GM12878 (cell line): ENCODE measurements at regions of chr5 and their contacts with region 1.

Region 1: DNA sequence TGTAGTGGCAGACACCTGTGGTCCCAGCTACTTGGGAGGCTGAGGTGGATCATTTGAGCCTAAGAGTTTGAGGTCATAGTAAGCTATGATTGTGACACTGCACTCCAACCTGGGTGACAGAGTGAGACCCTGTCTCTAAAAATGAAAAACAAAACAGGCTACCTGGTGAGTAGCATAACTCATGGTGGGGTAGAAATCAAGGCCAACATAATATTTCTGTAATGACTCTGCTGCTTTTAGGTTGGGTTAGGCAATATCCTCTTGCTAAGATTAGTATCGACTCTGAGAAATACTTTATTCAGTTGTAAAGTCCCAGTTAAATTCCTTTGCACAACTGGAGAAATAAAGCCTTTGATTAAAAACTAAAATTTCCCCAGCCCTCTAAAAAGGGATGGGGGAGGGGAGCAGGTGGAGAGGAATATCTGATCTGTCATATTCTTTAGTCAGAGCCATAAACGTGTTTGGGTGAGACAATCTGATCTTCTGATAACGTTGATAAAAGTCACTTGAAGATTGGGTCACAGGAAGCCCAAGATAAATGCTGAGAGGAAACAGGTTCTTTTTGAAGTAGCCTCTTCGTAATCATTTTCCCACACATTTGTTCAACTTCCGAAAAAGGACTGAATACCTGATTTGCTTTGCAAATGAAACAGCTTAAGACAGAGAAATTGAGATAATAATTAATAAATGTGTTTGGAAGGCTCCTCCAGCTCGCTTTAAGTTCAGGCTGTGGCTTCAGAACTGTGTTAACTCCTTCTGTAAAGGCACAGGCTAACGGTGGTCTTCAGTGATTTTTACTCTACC is 14.9 kb downstream of the IL4 start:
- DNase-seq: no peak
- ATAC-seq: peak; percentile 34
- H3K4me3 ChIP-seq: no peak overlapping the region
- H3K27ac ChIP-seq: no peak overlapping the region
- H3K4me1 ChIP-seq: peaks cover 18% of the 10 kb centered on the region; the same call in 1 of the 2 replicates
- H3K27me3 ChIP-seq: no peaks in the 10 kb centered on the region
- CTCF ChIP-seq: no peak
- EP300 ChIP-seq: no peak
- POLR2A ChIP-seq: no peak
- RAD21 ChIP-seq: no peak

Region 2: DNA sequence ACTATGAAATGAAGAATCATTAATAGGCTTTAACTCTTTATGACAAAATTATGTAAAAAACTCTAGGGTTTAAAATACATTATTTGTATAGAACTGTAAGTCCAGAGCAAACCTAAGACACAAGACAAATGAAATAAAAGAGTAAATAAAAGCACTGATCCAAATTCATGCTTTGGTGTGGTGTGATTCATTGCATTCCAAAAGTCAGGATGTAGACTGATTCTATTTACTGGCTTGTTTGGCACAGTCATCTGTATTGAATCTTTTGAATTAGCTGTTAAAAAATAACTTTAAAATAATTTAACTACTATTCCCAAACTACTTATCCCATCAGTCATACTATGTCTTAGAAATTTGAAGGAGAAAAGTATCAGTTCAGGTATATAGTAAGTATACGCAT is 16.1 kb after region 1 on chr5:
- CTCF ChIA-PET with region 1: interaction called, 12 read pairs
- POLR2A ChIA-PET with region 1: interaction called, 8 read pairs
- RAD21 ChIA-PET with region 1: interaction called, 8 read pairs
- SMC1A ChIA-PET with region 1: interaction called, 16 read pairs
- in situ Hi-C with region 1: no loop called
- intact Hi-C with region 1: no loop called
- DNase-seq: no peak
- ATAC-seq: no peak
- H3K4me3 ChIP-seq: no peak overlapping the region
- H3K27ac ChIP-seq: no peak overlapping the region
- H3K4me1 ChIP-seq: no peaks in the 10 kb centered on the region
- H3K27me3 ChIP-seq: no peaks in the 10 kb centered on the region
- CTCF ChIP-seq: no peak
- EP300 ChIP-seq: no peak
- POLR2A ChIP-seq: no peak
- RAD21 ChIP-seq: no peak

Region 3: DNA sequence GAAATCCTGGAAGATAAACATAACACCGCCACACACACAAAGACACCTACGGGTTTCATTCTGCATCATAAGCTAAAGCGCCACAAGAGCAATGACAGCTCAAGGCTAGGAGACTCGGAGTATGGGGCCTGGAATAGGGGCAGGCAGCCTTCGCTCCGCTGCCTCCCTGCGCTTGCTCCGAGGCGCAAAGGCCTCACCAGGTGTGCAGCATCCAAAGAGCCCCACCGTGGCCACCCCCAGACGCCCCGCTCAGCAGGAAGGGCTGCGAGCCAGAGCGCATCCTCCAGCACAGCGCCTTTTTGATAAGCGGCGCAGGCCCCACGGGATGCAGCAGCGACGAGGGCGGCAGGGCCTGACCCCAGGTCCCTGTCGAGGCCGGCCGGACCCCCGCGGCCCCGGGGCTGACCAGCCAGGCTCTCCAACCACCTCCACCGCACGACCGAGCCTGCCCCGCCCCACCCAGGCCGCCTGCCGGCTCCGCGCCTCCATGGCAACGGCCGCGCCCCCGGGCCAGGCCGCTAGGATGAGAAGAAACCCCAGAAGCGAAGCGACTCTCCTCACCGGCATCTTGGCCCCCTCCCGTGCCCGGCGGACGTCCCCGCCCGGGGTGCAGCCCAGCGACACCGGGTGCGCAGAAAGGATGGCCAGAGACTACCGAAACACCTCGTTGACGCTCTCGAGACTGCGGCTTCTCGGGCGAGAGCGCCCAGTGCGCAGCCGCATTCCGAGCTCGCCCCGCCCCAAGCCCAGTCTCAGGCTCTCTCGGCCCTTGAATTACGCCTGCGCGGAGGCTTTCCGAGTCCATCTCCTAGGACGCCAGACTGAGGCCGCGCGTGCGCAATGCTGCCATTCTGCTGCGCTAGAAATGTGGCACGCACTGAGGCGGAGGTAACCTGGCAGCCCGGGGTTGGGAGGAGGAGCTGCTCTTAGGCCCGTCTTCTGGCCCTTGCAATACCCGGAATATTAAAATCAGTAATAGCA is 48.4 kb after region 1 on chr5 and contains the start of gene KIF3A:
- CTCF ChIA-PET with region 1: no interaction called
- POLR2A ChIA-PET with region 1: interaction called, 3 read pairs
- RAD21 ChIA-PET with region 1: interaction called, 9 read pairs
- SMC1A ChIA-PET with region 1: interaction called, 19 read pairs
- in situ Hi-C with region 1: no loop called
- intact Hi-C with region 1: no loop called
- DNase-seq: peak; percentile 94
- ATAC-seq: peak; percentile 91
- H3K4me3 ChIP-seq: peak within 1 kb of the TSS; percentile 80
- H3K27ac ChIP-seq: peak within 1 kb of the TSS; percentile 52
- H3K4me1 ChIP-seq: no peaks in the 10 kb centered on the region
- H3K27me3 ChIP-seq: no peaks in the 10 kb centered on the region
- CTCF ChIP-seq: no peak
- EP300 ChIP-seq: no peak
- POLR2A ChIP-seq: peak; percentile 89
- RAD21 ChIP-seq: no peak
- polyA plus RNA-seq, gene KIF3A: 2.7 to 3.0 TPM